B cell (primary cell): ENCODE measurements at regions of chr13 and their contacts with region 1.

Region 1: GRCh38 chr13:49936085-49936940 is at the start of gene SPRYD7:
- DNase-seq: peak; percentile 98
- ATAC-seq: peak; percentile 97
- H3K4me3 ChIP-seq: peak within 1 kb of the TSS; percentile 76 to 94 (median 84)
- H3K4me3 Mint-ChIP-seq: peak within 1 kb of the TSS; percentile 88
- H3K27ac ChIP-seq: peak within 1 kb of the TSS; percentile 64 to 90
- H3K27ac Mint-ChIP-seq: peak within 1 kb of the TSS; percentile 86
- H3K4me1 ChIP-seq: peaks cover 15 to 17% of the 10 kb centered on the region in 2 donors
- H3K4me1 Mint-ChIP-seq: peaks cover 31% of the 10 kb centered on the region
- H3K27me3 ChIP-seq: no peaks in the 10 kb centered on the region
- H3K27me3 Mint-ChIP-seq: no peaks in the 10 kb centered on the region
- CTCF ChIP-seq: peak; percentile 80
- total RNA-seq, gene SPRYD7: 3.8 and 4.5 TPM in 2 replicates

Region 2: DNA sequence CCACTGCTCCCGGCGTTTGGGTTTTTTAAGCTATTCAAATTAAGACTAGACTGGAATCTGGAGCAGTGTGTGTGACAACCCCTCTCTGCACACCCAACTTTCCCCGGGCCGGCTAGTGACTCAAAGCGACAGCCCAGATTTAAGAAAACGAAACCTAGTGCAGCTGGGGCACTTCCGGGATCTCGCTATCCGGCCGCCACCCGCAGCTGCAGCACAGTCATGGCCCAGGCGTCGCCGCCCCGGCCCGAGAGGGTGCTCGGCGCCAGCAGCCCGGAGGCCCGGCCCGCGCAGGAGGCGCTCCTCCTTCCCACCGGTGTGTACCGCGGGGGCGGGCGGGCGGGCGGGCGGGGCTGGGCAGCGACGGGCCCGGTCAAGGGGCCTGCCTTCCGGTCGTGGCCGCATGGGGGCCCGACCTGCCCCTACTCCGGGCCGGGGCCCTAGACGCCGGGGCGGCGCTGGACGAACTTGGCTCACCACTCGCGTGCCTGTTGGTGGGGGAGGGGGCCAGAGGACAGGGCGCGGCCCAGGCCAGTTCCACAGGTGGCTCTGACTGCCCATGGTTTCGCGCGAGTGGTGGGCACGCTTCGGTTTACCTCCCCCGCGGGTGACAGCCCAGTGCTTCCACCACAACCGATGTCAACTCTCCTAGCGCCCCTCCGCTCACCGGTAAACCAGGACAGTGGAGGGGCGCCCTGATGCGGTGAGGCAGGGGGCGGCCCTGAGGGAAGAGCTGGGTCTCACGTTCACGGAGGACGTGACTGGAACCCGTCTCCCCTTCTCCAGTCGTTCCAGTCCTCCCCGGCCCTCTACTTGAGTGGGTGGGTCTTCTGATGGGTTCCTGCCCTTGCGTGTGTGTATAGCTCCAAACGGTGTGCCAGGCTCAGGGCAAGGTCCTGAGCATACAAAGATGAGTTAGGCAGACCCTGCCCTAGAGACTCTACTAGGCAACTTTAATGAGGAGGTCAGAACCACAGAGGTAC is 440.2 kb before region 1 on chr13 and contains the start of gene PHF11:
- CTCF ChIA-PET with region 1: no interaction called
- POLR2A ChIA-PET with region 1: no interaction called
- intact Hi-C with region 1: loop called (anchors 1 kb)
- DNase-seq: peak; percentile 92
- ATAC-seq: peak; percentile 80
- H3K4me3 ChIP-seq: peak within 1 kb of the TSS; percentile 67 to 90 (median 77)
- H3K4me3 Mint-ChIP-seq: peak within 1 kb of the TSS; percentile 95
- H3K27ac ChIP-seq: peak within 1 kb of the TSS; percentile 89 to 95
- H3K27ac Mint-ChIP-seq: peak within 1 kb of the TSS; percentile 99
- H3K4me1 ChIP-seq: peaks cover 6 to 20% of the 10 kb centered on the region in 2 donors
- H3K4me1 Mint-ChIP-seq: peaks cover 40% of the 10 kb centered on the region
- H3K27me3 ChIP-seq: no peaks in the 10 kb centered on the region
- H3K27me3 Mint-ChIP-seq: no peaks in the 10 kb centered on the region
- CTCF ChIP-seq: no peak
- total RNA-seq, gene PHF11: 176 and 181 TPM in 2 replicates

Region 3: GRCh38 chr13:49635599-49636433 is 300.5 kb before region 1 on chr13:
- CTCF ChIA-PET with region 1: no interaction called
- POLR2A ChIA-PET with region 1: interaction called, 11 read pairs
- intact Hi-C with region 1: no loop called
- DNase-seq: peak; percentile 72
- ATAC-seq: peak; percentile 83
- H3K4me3 ChIP-seq: peak overlapping the region in 4 of 5 experiments; percentile 41 to 57 (median 50)
- H3K4me3 Mint-ChIP-seq: peak overlapping the region; percentile 78
- H3K27ac ChIP-seq: peak overlapping the region; percentile 58 to 60
- H3K27ac Mint-ChIP-seq: peak overlapping the region; percentile 87
- H3K4me1 ChIP-seq: peaks cover 13 to 19% of the 10 kb centered on the region in 2 donors
- H3K4me1 Mint-ChIP-seq: peaks cover 62% of the 10 kb centered on the region
- H3K27me3 ChIP-seq: no peaks in the 10 kb centered on the region
- H3K27me3 Mint-ChIP-seq: no peaks in the 10 kb centered on the region
- CTCF ChIP-seq: no peak

Region 4: DNA sequence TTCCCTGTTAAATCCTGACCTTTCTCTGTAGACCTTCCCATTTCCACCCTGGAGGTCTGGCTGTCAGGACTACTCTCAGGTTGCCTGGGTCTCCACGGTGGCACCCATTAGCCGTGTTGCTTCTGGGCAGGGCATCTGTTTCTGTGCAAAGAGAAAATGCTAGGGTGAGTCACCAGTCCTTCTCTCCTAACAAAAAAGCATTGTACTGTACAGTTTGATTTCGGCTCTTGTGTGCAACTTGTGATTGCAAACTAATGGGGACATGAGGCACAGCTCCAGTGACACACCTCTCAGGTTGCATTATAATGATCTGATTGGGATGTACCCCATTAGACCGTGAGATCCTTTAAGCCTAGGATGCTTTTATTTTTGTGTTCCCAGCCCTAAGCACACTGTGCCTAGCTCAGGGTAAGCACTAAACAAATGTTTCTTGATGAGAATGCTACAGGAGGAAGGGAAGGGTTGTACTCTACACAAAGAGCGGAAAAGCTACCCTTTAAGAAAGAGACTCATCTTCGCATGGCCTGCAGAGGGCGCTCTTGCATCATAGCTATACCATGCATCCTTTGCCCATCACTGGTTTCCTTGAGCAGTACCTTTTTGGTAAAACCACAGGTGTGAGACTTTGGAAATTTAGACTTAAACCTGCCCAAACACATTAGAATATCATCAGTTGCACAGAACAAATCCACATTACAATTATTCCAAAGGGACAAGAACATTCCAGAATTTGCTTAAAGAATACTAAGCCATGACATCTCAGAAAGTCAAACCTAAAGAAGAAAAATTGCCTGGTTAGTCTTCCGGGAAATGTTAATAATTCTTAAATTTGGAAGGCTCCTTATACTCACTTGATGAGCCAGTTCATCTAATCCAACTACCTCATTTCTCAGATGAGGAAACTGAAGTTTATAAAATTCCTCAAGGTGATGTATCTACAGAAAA is 40.3 kb after region 1 on chr13:
- CTCF ChIA-PET with region 1: interaction called, 10 read pairs
- POLR2A ChIA-PET with region 1: no interaction called
- intact Hi-C with region 1: no loop called
- DNase-seq: peak; percentile 86
- ATAC-seq: peak; percentile 78
- H3K4me3 ChIP-seq: no peak overlapping the region
- H3K4me3 Mint-ChIP-seq: no peak overlapping the region
- H3K27ac ChIP-seq: no peak overlapping the region
- H3K27ac Mint-ChIP-seq: no peak overlapping the region
- H3K4me1 ChIP-seq: peaks cover 0 to 4% of the 10 kb centered on the region in 2 donors
- H3K4me1 Mint-ChIP-seq: peaks cover 4% of the 10 kb centered on the region
- H3K27me3 ChIP-seq: no peaks in the 10 kb centered on the region
- H3K27me3 Mint-ChIP-seq: no peaks in the 10 kb centered on the region
- CTCF ChIP-seq: peak; percentile 98

Region 5: DNA sequence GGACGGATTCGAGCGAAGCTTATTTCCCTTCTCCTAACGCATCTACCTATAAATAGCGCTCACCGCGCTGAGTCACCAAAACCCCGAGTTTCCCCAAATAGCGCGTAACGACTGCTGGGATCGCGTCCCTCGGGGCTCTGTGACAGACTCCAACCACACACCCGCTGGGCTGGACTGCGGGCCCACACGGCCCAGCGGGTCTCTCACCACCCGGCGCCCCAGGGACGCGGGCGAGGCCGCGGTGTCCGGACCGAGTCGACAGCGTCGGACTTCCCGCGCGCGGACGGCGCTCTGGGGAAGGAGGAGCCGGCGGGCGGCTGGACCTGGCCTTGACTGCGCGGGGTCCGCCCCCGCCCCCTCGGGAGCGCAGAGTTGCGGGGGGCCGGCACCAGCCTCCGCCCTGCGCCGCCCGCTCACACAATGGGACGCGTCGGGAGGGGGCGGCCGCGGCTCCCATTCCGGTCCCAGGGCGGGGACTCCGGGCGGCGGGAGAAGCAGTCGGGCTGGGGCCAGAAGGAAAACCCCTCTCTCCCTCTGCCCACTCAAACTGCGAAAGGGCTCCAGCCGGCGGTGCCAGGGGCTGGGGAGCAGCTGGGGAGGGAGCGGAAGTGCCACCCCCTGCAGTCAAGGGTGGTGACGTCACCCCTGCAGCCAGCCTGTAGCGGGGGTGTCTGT is 187.7 kb after region 1 on chr13:
- CTCF ChIA-PET with region 1: interaction called, 6 read pairs
- POLR2A ChIA-PET with region 1: interaction called, 3 read pairs
- intact Hi-C with region 1: loop called (anchors 1 kb)
- DNase-seq: peak; percentile 84
- ATAC-seq: peak; percentile 62
- H3K4me3 ChIP-seq: peak overlapping the region; percentile 77 to 98 (median 98)
- H3K4me3 Mint-ChIP-seq: peak overlapping the region; percentile 92
- H3K27ac ChIP-seq: peak overlapping the region; percentile 73 to 98
- H3K27ac Mint-ChIP-seq: peak overlapping the region; percentile 96
- H3K4me1 ChIP-seq: peaks cover 50 to 54% of the 10 kb centered on the region in 2 donors
- H3K4me1 Mint-ChIP-seq: peaks cover 64% of the 10 kb centered on the region
- H3K27me3 ChIP-seq: peaks cover 0 to 12% (median 6%) of the 10 kb centered on the region in 4 experiments
- H3K27me3 Mint-ChIP-seq: peaks cover 7% of the 10 kb centered on the region
- CTCF ChIP-seq: no peak

Region 6: GRCh38 chr13:51583875-51584730 is 1647.8 kb after region 1 on chr13 and contains the start of gene WDFY2:
- CTCF ChIA-PET with region 1: no interaction called
- POLR2A ChIA-PET with region 1: no interaction called
- intact Hi-C with region 1: loop called (anchors 10 kb)
- DNase-seq: peak; percentile 100
- ATAC-seq: peak; percentile 80
- H3K4me3 ChIP-seq: peak within 1 kb of the TSS; percentile 68 to 94 (median 91)
- H3K4me3 Mint-ChIP-seq: peak within 1 kb of the TSS; percentile 97
- H3K27ac ChIP-seq: peak within 1 kb of the TSS; percentile 81 to 88
- H3K27ac Mint-ChIP-seq: peak within 1 kb of the TSS; percentile 98
- H3K4me1 ChIP-seq: peaks cover 12 to 14% of the 10 kb centered on the region in 2 donors
- H3K4me1 Mint-ChIP-seq: peaks cover 35% of the 10 kb centered on the region
- H3K27me3 ChIP-seq: no peaks in the 10 kb centered on the region
- H3K27me3 Mint-ChIP-seq: no peaks in the 10 kb centered on the region
- CTCF ChIP-seq: no peak
- total RNA-seq, gene WDFY2: 46.1 and 47.7 TPM in 2 replicates